K562 (cell line): ENCODE measurements at regions of chr7 and their contacts with region 1.

Region 1: GRCh38 chr7:87003872-87004798 is 55.3 kb downstream of the ELAPOR2 start:
- DNase-seq: peak in 3 of 4 experiments; percentile 41 to 86 (median 65)
- ATAC-seq: peak; percentile 91
- H3K4me3 ChIP-seq: peak overlapping the region; percentile 10; the same call in 1 of the 2 replicates
- H3K27ac ChIP-seq: peak overlapping the region; percentile 66; the same call in 2 of the 3 replicates
- H3K4me1 ChIP-seq: peaks cover 0 to 25% of the 10 kb centered on the region in 2 experiments; a peak in 3 of 5 replicates
- H3K27me3 ChIP-seq: no peaks in the 10 kb centered on the region
- CTCF ChIP-seq: no peak
- EP300 ChIP-seq: peak; percentile 35; the same call in 1 of the 2 replicates
- POLR2A ChIP-seq: no peak
- RAD21 ChIP-seq: no peak

Region 2: GRCh38 chr7:86939197-86939814 is 64.8 kb before region 1 on chr7:
- CTCF ChIA-PET with region 1: no interaction called
- POLR2A ChIA-PET with region 1: no interaction called
- in situ Hi-C with region 1: no loop called
- intact Hi-C with region 1: loop called (anchors 5 kb)
- DNase-seq: peak; percentile 33 to 82 (median 42)
- ATAC-seq: peak; percentile 87
- H3K4me3 ChIP-seq: no peak overlapping the region
- H3K27ac ChIP-seq: no peak overlapping the region
- H3K4me1 ChIP-seq: peaks cover 0 to 9% of the 10 kb centered on the region in 2 experiments; a peak in 2 of 5 replicates
- H3K27me3 ChIP-seq: no peaks in the 10 kb centered on the region
- CTCF ChIP-seq: peak; percentile 59 to 83 (median 78); a peak in 5 of 6 replicates
- EP300 ChIP-seq: no peak
- POLR2A ChIP-seq: no peak
- RAD21 ChIP-seq: peak; percentile 87 to 88